ENCODE measurements at regions of chr15 and their contacts with region 1.

Region 1: GRCh38 chr15:67945951-67946700 is 106.3 kb upstream of the RNU6-1 start:
- ATAC-seq: peak; percentile 82 to 95 (median 92)
- H3K4me3 ChIP-seq: no peak overlapping the region
- H3K27ac ChIP-seq: peak overlapping the region; percentile 52 to 57
- H3K4me1 ChIP-seq: peaks cover 14 to 17% of the 10 kb centered on the region in 2 donors

Region 2: DNA sequence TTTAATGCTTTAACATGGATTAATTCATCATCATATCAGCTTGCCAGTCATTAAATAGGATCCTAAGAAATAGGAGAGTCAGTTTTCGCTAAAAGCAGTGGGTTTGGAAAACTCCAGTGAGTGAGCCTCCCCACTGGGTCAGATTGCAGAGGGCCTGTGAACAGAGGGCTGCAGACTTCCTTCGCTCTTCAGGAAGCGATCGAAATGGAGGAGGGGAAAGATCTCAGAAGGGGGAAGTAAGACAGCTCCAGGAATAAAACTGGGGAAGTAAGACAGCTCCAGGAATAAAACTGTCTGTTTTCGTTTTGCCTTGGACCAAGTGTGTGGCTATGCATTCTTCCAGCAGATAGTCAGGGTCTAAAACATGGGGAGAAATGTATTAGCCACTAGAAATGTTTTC is 550.0 kb before region 1 on chr15:
- in situ Hi-C with region 1: no loop called
- ATAC-seq: no peak
- H3K4me3 ChIP-seq: no peak overlapping the region
- H3K27ac ChIP-seq: no peak overlapping the region
- H3K4me1 ChIP-seq: peaks cover 2 to 12% of the 10 kb centered on the region in 2 donors

Region 3: DNA sequence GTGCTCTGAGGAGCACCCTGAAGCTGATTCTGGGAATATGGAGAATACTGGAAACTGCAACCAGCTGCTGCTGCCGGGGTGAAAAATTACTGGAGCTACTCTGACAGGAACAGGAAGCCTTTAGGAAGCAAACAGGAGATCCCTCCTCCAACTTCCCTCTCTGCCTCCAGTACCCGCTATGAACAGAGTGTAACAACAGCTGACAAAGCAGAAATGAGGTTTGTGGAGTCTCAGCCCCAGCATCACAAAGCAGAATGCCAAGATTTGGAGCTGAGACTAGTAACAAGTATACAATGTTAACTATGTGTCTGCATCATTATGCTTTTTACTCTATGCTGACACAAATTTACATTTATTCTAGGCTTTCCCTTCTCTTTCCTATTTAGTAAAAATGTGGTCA is 85.3 kb after region 1 on chr15:
- in situ Hi-C with region 1: loop called in 1 of 9 experiments (anchors 25 kb)
- ATAC-seq: no peak
- H3K4me3 ChIP-seq: no peak overlapping the region
- H3K27ac ChIP-seq: no peak overlapping the region
- H3K4me1 ChIP-seq: no peaks in the 10 kb centered on the region

Measured in motor neuron (in vitro differentiated cells).